AG04449 (cell line): ENCODE measurements at regions of chr11 and their contacts with region 1.

Region 1: DNA sequence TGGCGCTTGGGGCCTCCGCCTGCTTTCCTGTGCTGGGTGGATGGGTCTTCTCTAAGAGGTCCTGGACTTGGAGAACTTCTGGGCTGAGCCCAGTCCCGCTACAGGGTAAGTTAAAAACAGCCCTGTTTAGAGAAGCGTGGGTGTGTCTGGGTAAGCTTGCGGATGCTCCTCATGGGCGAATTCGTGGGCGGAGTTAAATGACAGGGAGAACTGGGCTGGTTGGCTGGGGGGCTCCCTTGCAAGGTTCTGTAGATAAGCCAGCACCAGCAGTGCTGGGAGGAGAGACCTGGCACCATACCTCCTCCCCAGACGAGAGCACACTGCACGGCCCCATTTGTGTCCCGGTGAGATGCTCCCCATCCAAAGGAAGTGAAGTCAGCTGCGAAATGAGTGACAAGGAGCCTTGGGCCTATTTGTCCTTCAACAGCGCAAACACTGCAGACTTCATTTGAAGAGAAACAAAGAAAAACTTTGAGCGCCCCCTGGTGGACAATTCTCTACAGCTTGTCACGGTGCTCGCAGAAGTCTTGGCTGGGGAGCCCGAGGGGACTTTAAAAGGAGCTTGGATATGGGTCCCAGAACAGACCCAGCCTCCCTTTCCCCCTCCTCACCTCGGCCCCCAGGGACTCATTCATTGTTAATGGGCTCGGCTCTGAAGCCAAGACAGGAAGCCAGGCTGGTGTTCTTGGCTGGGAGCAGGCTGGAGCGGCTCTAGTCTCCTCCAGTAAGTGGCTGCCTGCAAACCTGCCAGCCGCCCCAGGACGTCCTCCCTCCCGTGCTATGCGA is 39.5 kb downstream of the TP53I11 start:
- DNase-seq: peak; percentile 29
- H3K4me3 ChIP-seq: no peak overlapping the region
- CTCF ChIP-seq: peak; percentile 61

Region 2: DNA sequence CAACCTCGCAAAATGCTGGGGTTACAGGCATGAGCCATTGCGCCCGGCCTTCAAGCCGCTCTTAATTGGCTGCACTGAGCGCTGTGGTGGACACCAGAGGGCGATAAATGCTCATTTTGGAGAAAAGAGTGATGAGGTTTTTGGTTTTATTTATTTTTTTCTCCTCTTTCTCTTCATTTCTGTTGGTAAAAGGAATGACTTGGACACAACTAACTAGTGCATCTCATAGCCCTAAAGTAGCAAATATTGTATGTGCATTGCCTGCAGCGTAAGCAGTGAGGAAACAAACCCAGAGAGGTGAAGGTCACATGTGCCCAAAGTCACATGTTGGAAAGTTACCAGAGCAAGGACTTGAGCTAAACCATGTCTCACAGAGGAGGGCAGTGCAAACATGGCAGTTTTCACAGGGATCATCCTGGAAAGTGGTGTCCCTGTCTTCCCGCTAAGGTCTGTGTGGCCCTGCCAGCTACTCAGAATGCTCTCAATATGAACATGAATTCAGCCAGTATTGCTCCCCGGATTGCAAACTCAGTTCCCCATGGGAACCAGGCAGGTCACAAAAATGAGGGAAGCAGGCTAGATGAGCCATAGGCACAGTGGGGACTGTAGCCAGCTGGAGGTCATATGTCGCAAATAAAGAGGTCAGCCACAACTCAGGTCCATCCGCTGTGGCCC is 354.4 kb before region 1 on chr11:
- CTCF ChIA-PET with region 1: interaction called, 72 read pairs
- POLR2A ChIA-PET with region 1: no interaction called
- DNase-seq: no peak
- H3K4me3 ChIP-seq: no peak overlapping the region
- CTCF ChIP-seq: peak; percentile 75

Region 3: GRCh38 chr11:44726283-44727113 is 184.7 kb before region 1 on chr11 and contains the start of gene TSPAN18:
- CTCF ChIA-PET with region 1: interaction called, 21 read pairs
- POLR2A ChIA-PET with region 1: no interaction called
- DNase-seq: no peak
- H3K4me3 ChIP-seq: peak within 1 kb of the TSS; percentile 75
- CTCF ChIP-seq: no peak

Region 4: GRCh38 chr11:44795803-44796535 is 115.3 kb before region 1 on chr11:
- CTCF ChIA-PET with region 1: no interaction called
- POLR2A ChIA-PET with region 1: no interaction called
- DNase-seq: no peak
- H3K4me3 ChIP-seq: no peak overlapping the region
- CTCF ChIP-seq: no peak

Region 5: GRCh38 chr11:44893846-44894617 is 17.2 kb before region 1 on chr11:
- CTCF ChIA-PET with region 1: interaction called, 75 read pairs
- POLR2A ChIA-PET with region 1: no interaction called
- DNase-seq: no peak
- H3K4me3 ChIP-seq: no peak overlapping the region
- CTCF ChIP-seq: peak; percentile 99

Region 6: DNA sequence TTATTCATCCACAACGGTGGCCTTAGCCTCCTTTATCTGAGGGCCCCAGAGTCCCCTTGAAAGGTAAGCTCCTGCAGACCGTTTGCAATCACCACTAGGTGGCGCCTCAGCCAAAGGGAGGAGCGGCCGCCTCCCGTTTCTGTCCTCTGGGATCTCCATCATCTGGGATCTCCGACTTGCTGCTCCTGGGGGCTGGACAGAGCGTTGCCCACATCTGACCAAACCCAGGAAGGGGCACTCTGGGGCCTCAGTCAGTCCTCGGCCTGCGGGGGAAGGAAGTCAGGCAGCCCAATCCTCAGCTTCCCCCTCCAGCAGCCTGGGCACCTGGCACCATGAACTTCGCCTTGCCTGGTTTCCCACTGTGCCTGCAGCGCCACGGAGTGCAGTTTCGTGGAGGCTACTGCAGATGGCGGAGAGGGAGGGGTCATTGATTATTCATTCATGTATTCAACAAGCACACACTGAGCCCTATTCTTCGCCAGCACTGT is 16.0 kb after region 1 on chr11:
- CTCF ChIA-PET with region 1: interaction called, 23 read pairs
- POLR2A ChIA-PET with region 1: no interaction called
- DNase-seq: no peak
- H3K4me3 ChIP-seq: no peak overlapping the region
- CTCF ChIP-seq: peak; percentile 89

Region 7: GRCh38 chr11:45204761-45205160 is 293.5 kb after region 1 on chr11:
- CTCF ChIA-PET with region 1: no interaction called
- POLR2A ChIA-PET with region 1: no interaction called
- DNase-seq: no peak
- H3K4me3 ChIP-seq: no peak overlapping the region
- CTCF ChIP-seq: no peak

Region 8: DNA sequence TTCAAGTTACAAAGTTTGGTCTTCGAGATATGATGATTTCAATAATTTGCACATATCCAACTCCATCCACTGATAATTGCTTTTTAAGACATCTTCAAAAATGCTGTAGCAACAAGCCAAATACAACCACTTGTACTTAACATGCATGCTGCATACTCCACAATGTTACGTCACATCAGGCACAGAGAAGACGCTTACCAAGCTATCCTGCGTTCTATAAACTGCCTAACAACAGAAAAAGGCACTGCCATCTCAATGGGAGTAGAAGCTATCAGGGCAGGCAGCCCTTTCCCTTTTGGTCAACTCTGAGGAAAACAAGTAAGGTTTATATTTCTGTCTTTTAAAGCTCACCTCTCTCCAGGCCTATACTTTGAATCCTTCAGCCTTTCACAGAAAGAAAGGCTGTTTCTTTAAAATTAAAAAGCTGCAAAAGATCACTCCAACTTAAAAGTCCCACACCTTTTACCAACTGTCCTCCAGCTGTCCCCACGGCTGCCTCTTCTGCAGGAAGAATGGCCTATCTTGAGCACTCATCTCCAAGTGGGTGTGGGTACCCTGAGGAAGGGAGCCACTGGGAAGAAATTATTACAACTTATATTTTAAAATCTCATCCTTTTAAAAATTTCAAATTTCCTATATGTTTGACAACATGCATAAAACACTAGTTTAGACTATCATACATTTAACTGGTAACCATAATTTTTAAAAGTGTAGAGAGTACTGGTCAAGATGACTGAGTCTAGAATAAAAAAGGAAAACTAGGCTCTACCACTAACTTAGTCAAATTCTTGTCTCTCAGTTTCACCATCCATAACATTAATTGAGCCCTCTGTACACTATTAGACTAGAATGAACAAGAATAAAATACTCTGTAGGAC is 1195.5 kb after region 1 on chr11:
- CTCF ChIA-PET with region 1: no interaction called
- POLR2A ChIA-PET with region 1: no interaction called
- DNase-seq: no peak
- H3K4me3 ChIP-seq: no peak overlapping the region
- CTCF ChIP-seq: no peak